ENCODE measurements at regions of chr15 and their contacts with region 1.

Region 1: DNA sequence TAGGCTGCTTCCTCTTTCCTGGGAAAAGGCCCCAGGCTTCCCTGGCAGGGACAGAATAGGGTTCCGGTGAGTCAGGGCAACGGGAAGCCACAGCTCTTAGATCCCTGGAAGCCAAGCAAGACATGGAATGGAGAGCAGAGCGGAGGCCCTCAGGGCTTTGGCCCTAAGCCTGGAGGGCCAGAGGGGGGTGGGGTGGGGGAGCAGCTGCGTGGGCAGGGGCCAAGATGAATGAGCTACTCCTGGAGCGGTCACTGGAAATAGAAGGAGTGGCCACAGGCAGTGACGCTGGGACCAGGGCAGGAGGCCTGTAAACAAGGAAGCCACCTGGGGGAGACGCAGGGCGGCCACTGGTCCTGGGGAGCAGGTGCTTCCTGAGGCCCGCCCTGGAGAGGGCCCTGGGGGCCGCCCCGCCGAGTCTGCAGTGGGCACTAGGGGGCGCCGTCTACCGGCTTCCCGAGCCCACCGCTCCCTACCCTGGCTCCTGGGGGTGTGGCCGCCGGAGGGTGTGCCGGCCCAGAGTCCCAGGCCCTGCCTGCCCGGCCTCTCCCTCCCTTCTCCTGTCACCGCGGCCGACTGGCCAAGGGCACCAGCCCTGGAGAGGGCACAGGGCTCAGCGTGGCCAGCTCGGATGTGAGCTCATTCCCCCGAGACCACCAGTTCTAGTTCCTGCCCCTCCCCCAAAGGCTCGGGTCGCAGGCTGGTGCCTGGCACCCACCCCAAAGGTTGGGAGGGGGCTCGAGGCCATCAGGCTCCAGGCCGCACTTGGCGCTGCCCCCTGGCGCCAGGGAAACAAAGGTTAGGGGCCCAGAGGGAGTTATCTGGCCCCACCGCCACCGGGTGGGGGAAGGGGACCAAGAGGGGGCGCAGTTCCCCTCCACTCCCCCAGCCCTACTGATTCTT is 12.1 kb downstream of the VPS18 start:
- DNase-seq: peak; percentile 95
- H3K4me3 ChIP-seq: peak overlapping the region; percentile 43 to 57
- H3K27ac ChIP-seq: peak overlapping the region; percentile 74 to 86
- H3K4me1 ChIP-seq: peaks cover 12 to 42% of the 10 kb centered on the region in 2 experiments; a peak in 3 of 4 replicates
- H3K27me3 ChIP-seq: no peaks in the 10 kb centered on the region
- CTCF ChIP-seq: peak; percentile 72
- EP300 ChIP-seq: no peak
- RAD21 ChIP-seq: peak; percentile 70

Region 2: GRCh38 chr15:40952901-40953712 is 46.8 kb after region 1 on chr15 and contains the start of gene CHAC1:
- CTCF ChIA-PET with region 1: interaction called, 17 read pairs
- POLR2A ChIA-PET with region 1: interaction called, 5 read pairs
- DNase-seq: peak; percentile 100
- H3K4me3 ChIP-seq: peak within 1 kb of the TSS; percentile 76 to 90
- H3K27ac ChIP-seq: peak within 1 kb of the TSS; percentile 74 to 93
- H3K4me1 ChIP-seq: peaks cover 18 to 41% of the 10 kb centered on the region in 2 experiments; a peak in 3 of 4 replicates
- H3K27me3 ChIP-seq: no peaks in the 10 kb centered on the region
- CTCF ChIP-seq: no peak
- EP300 ChIP-seq: no peak
- RAD21 ChIP-seq: 0 out of 2 replicates have a peak, but pooled peaks have one; percentile 1
- polyA plus RNA-seq, gene CHAC1: 9.3 and 12.3 TPM in 2 replicates

Region 3: GRCh38 chr15:40968290-40969085 is 62.1 kb after region 1 on chr15:
- CTCF ChIA-PET with region 1: interaction called, 10 read pairs
- POLR2A ChIA-PET with region 1: no interaction called
- DNase-seq: no peak
- H3K4me3 ChIP-seq: no peak overlapping the region
- H3K27ac ChIP-seq: no peak overlapping the region
- H3K4me1 ChIP-seq: peaks cover 0 to 9% of the 10 kb centered on the region in 2 experiments; a peak in 1 of 4 replicates
- H3K27me3 ChIP-seq: no peaks in the 10 kb centered on the region
- CTCF ChIP-seq: no peak
- EP300 ChIP-seq: no peak
- RAD21 ChIP-seq: no peak

Region 4: DNA sequence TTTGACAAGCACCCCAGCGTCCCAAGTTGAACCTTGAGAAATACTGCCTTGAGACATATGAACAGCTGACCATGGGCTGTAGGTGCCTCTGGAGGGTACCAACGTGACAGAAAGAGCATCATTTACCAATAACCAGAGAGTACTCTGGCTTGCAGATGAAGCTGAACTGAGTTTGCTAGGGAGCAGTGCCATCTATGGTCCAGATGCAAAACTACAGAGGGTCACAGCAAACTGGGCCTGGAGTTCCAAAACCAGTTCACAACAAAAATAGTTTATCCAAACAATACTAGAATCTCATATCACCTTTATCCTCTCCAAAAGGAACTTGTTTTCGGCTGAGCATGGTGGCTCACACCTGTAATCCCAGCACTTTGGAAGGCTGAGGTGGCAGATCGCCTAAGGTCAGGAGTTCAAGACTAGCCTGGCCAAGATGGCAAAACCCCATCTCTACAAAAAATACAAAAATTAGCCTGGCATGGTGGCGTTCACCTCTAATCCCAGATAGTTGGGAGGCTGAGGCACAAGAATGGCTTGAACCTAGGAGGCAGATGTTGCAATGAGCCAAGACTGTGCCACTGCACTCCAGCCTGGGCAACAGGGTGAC is 116.2 kb after region 1 on chr15:
- CTCF ChIA-PET with region 1: interaction called, 324 read pairs
- POLR2A ChIA-PET with region 1: no interaction called
- DNase-seq: peak; percentile 61
- H3K4me3 ChIP-seq: no peak overlapping the region; a peak in 1 of 4 replicates
- H3K27ac ChIP-seq: no peak overlapping the region
- H3K4me1 ChIP-seq: peaks cover 2 to 23% of the 10 kb centered on the region in 2 experiments; a peak in 3 of 4 replicates
- H3K27me3 ChIP-seq: no peaks in the 10 kb centered on the region
- CTCF ChIP-seq: peak; percentile 83
- EP300 ChIP-seq: no peak
- RAD21 ChIP-seq: peak; percentile 91

Region 5: GRCh38 chr15:41169781-41170180 is 263.4 kb after region 1 on chr15:
- CTCF ChIA-PET with region 1: interaction called, 15 read pairs
- POLR2A ChIA-PET with region 1: no interaction called
- DNase-seq: no peak
- H3K4me3 ChIP-seq: no peak overlapping the region
- H3K27ac ChIP-seq: no peak overlapping the region
- H3K4me1 ChIP-seq: no peaks in the 10 kb centered on the region
- H3K27me3 ChIP-seq: no peaks in the 10 kb centered on the region
- CTCF ChIP-seq: no peak
- EP300 ChIP-seq: no peak
- RAD21 ChIP-seq: no peak

Measured in SK-N-SH (cell line).